ENCODE measurements at regions of chr6 and their contacts with region 1.

Region 1: DNA sequence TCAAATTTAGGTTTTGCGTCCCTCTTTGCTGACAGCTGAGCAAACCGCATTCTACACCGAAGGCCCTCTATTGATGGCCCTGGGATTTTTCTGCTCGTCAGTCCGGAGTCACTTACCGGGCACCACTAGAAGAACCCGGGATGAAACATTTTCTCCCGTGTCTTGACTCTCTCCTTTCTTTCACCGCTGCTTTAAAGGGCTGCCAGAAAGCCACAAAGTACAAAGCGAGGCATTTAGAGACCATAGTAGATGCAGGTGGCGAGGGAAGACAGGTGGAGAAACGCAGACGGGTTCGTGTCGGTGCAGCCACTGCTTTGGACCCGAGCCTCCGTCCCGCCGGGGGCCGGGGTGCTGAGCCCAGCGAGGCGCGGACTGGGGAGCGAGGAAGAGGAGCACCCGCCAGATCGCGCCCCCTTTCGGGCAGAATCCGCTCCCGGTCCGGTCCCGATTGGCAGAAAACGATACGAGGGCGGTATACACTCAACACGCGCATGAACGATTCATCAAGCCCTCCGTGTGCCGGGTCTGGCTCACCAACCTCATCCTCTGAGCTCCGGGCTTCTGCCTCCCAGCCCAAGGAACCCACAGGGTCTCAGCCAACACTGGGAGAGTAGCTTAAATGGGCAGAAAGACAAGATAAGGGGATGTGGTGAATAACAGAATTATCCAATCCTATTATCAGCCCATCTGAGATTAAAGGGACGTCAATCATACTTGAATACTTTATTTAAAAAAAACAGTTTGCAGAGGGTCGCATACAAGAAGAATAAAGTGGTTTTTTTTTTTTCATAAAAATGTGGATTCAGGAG is 84.9 kb downstream of the TRIM27 start:
- DNase-seq: peak; percentile 96
- H3K4me3 Mint-ChIP-seq: peak overlapping the region; percentile 99
- H3K27ac Mint-ChIP-seq: peak overlapping the region; percentile 98
- H3K4me1 Mint-ChIP-seq: peaks cover 9% of the 10 kb centered on the region
- H3K27me3 Mint-ChIP-seq: peaks cover 7% of the 10 kb centered on the region
- CTCF ChIP-seq: peak; percentile 84

Region 2: GRCh38 chr6:28683944-28684538 is 154.8 kb before region 1 on chr6:
- CTCF ChIA-PET with region 1: no interaction called
- intact Hi-C with region 1: loop called (anchors 5 kb)
- DNase-seq: peak; percentile 48
- H3K4me3 Mint-ChIP-seq: peak overlapping the region; percentile 65
- H3K27ac Mint-ChIP-seq: no peak overlapping the region
- H3K4me1 Mint-ChIP-seq: peaks cover 35% of the 10 kb centered on the region
- H3K27me3 Mint-ChIP-seq: no peaks in the 10 kb centered on the region
- CTCF ChIP-seq: peak; percentile 85

Region 3: GRCh38 chr6:28695715-28696114 is 143.1 kb before region 1 on chr6:
- CTCF ChIA-PET with region 1: no interaction called
- intact Hi-C with region 1: no loop called
- DNase-seq: no peak
- H3K4me3 Mint-ChIP-seq: no peak overlapping the region
- H3K27ac Mint-ChIP-seq: no peak overlapping the region
- H3K4me1 Mint-ChIP-seq: no peaks in the 10 kb centered on the region
- H3K27me3 Mint-ChIP-seq: peaks cover 80% of the 10 kb centered on the region
- CTCF ChIP-seq: no peak

Region 4: DNA sequence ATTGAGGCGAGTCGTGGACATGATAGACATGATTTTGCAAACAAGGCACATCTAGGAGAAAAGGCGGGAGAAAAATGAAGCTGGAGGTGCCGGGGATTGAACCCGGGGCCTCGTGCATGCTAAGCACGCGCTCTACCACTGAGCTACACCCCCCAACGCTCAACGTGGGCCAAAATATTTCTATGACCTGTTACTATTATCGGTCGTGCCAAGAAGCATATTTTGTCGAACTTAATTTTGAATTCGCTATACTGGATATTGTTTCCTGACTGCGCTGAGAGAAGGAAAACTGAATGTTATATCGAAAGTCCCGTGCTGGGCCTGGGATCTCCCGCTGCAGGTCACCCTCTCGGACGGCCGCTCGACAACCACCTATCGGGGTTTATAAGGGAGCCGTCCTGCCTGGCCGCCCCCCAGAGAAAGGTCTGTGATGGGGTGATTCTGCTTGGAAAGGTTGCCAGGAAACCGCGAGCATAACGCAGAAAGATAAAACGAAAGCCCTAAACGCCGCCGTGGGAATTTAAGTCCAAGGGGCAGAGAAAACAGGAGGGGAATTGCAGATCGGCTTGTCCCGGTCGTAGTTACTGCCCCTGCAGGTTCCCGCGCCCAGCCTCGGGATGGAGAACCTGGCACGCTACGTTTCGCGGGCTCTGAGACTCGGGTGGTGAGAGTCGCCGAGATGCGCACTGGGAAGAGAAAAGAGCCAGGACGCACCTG is 24.9 kb after region 1 on chr6:
- CTCF ChIA-PET with region 1: interaction called, 20 read pairs
- intact Hi-C with region 1: no loop called
- DNase-seq: peak; percentile 89
- H3K4me3 Mint-ChIP-seq: peak overlapping the region; percentile 94
- H3K27ac Mint-ChIP-seq: peak overlapping the region; percentile 95
- H3K4me1 Mint-ChIP-seq: peaks cover 23% of the 10 kb centered on the region
- H3K27me3 Mint-ChIP-seq: peaks cover 14% of the 10 kb centered on the region
- CTCF ChIP-seq: no peak

Region 5: GRCh38 chr6:28940858-28941680 is 102.2 kb after region 1 on chr6:
- CTCF ChIA-PET with region 1: interaction called, 15 read pairs
- intact Hi-C with region 1: loop called (anchors 2 kb)
- DNase-seq: peak; percentile 87
- H3K4me3 Mint-ChIP-seq: peak overlapping the region; percentile 94
- H3K27ac Mint-ChIP-seq: peak overlapping the region; percentile 97
- H3K4me1 Mint-ChIP-seq: peaks cover 45% of the 10 kb centered on the region
- H3K27me3 Mint-ChIP-seq: peaks cover 11% of the 10 kb centered on the region
- CTCF ChIP-seq: no peak

Region 6: DNA sequence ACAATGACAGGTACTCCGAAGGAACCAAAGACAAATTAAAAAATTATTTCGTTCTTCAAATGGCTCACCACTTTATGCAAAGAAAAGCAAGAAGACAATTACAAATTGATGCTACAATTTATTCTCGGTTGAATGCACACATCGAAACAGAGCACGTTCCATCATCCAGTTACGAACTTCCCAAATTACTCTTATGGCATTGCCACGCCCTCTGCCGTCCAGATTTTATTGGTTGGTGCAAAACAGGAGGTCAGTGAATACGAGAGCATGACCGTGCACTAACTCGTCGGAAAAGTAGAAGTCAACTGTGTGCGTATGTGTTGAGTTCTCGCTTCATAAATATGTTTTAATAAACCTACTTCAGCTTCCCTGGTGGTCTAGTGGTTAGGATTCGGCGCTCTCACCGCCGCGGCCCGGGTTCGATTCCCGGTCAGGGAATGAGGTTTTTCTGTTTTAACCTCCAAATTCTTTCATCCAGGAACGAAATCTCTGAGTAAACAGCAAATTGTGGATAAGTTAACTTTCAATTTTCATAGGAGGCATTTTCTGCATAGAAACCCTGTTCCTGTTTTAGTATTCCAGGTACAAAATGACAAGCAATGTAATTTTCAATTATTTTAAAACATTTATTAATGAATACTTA is 143.1 kb after region 1 on chr6:
- CTCF ChIA-PET with region 1: interaction called, 19 read pairs
- intact Hi-C with region 1: loop called (anchors 1 kb)
- DNase-seq: peak; percentile 81
- H3K4me3 Mint-ChIP-seq: peak overlapping the region; percentile 68
- H3K27ac Mint-ChIP-seq: peak overlapping the region; percentile 60
- H3K4me1 Mint-ChIP-seq: peaks cover 48% of the 10 kb centered on the region
- H3K27me3 Mint-ChIP-seq: no peaks in the 10 kb centered on the region
- CTCF ChIP-seq: no peak

Region 7: GRCh38 chr6:29227235-29227634 is 388.4 kb after region 1 on chr6:
- CTCF ChIA-PET with region 1: no interaction called
- intact Hi-C with region 1: loop called (anchors 10 kb)
- DNase-seq: no peak
- H3K4me3 Mint-ChIP-seq: no peak overlapping the region
- H3K27ac Mint-ChIP-seq: no peak overlapping the region
- H3K4me1 Mint-ChIP-seq: no peaks in the 10 kb centered on the region
- H3K27me3 Mint-ChIP-seq: peaks cover 15% of the 10 kb centered on the region
- CTCF ChIP-seq: no peak